A673 (cell line): ENCODE measurements at regions of chr12 and their contacts with region 1.

Region 1: GRCh38 chr12:74317078-74317601 is 220.5 kb upstream of the ATXN7L3B start:
- DNase-seq: peak; percentile 93
- H3K4me3 ChIP-seq: no peak overlapping the region
- H3K27ac ChIP-seq: peak overlapping the region; percentile 93
- H3K4me1 ChIP-seq: peaks cover 64% of the 10 kb centered on the region
- H3K27me3 ChIP-seq: no peaks in the 10 kb centered on the region
- CTCF ChIP-seq: peak; percentile 72

Region 2: DNA sequence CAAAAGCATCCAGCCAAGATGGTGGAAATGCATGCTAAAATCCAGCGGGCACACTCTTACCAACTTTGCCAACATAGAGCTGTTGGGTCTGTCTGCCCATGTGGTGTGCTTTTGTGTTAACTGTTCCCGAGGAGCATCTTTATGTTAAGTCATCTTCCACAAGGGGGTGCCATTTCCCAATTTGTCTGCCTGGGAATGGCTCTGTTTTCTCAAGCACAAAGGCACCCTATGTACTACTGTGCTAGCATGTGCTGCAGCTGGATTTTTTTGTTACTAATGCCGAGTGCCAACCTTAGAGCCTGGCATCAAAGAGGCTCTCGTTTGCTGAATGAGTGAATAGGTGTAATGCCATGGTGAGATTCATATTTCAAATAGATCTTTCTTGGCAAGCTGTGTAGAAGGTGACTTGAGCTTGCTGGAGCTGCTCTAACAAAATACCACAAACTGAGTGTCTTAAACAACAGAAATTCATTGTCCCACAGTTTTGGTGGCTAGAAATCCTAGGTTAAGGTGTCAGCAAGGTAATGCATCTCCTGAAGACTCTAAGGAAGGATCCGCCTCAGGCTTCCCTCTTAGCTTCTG is 1970.7 kb before region 1 on chr12:
- CTCF ChIA-PET with region 1: no interaction called
- POLR2A ChIA-PET with region 1: no interaction called
- intact Hi-C with region 1: loop called (anchors 2 kb)
- DNase-seq: peak; percentile 95
- H3K4me3 ChIP-seq: no peak overlapping the region
- H3K27ac ChIP-seq: no peak overlapping the region
- H3K4me1 ChIP-seq: peaks cover 32% of the 10 kb centered on the region
- H3K27me3 ChIP-seq: no peaks in the 10 kb centered on the region
- CTCF ChIP-seq: peak; percentile 74

Region 3: GRCh38 chr12:73419852-73420251 is 897.3 kb before region 1 on chr12:
- CTCF ChIA-PET with region 1: no interaction called
- POLR2A ChIA-PET with region 1: no interaction called
- intact Hi-C with region 1: loop called (anchors 5 kb)
- DNase-seq: no peak
- H3K4me3 ChIP-seq: no peak overlapping the region
- H3K27ac ChIP-seq: no peak overlapping the region
- H3K4me1 ChIP-seq: no peaks in the 10 kb centered on the region
- H3K27me3 ChIP-seq: no peaks in the 10 kb centered on the region
- CTCF ChIP-seq: no peak

Region 4: DNA sequence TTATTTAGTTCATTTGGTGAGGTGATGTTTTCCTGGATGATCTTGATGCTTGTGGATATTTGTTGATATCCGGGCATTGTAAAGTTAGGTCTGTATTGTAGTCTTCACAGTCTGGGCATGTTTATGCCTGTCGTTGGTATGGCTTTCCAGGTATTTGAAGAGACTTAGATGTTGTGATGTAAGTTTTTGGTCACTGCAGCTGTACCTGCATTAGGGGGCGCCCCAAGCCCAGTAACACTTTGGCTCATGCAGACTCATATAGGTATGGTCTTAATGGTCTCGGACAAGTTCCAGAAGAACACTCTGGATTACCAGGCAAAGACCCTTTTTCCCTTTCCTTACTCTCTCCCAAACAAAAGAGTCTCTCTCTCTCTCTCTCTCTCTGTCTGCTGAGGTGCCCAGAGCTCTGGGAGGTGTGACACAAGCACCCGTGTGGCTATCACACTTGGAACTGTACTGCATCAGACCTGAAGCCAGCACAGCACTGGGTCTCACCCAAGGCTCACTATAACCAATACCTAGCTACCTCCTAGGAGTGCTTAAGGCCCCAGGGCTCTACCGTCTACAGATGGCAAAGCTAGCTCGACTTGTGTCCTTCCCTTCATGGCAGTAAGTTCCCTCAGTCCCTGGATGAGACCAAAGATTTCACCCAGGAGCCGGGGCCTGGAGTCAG is 205.3 kb before region 1 on chr12:
- CTCF ChIA-PET with region 1: no interaction called
- POLR2A ChIA-PET with region 1: no interaction called
- intact Hi-C with region 1: loop called (anchors 5 kb)
- DNase-seq: peak; percentile 51
- H3K4me3 ChIP-seq: no peak overlapping the region
- H3K27ac ChIP-seq: no peak overlapping the region
- H3K4me1 ChIP-seq: no peaks in the 10 kb centered on the region
- H3K27me3 ChIP-seq: no peaks in the 10 kb centered on the region
- CTCF ChIP-seq: peak; percentile 63

Region 5: GRCh38 chr12:74285773-74286172 is 31.4 kb before region 1 on chr12:
- CTCF ChIA-PET with region 1: no interaction called
- POLR2A ChIA-PET with region 1: no interaction called
- intact Hi-C with region 1: no loop called
- DNase-seq: no peak
- H3K4me3 ChIP-seq: no peak overlapping the region
- H3K27ac ChIP-seq: no peak overlapping the region
- H3K4me1 ChIP-seq: no peaks in the 10 kb centered on the region
- H3K27me3 ChIP-seq: no peaks in the 10 kb centered on the region
- CTCF ChIP-seq: no peak

Region 6: DNA sequence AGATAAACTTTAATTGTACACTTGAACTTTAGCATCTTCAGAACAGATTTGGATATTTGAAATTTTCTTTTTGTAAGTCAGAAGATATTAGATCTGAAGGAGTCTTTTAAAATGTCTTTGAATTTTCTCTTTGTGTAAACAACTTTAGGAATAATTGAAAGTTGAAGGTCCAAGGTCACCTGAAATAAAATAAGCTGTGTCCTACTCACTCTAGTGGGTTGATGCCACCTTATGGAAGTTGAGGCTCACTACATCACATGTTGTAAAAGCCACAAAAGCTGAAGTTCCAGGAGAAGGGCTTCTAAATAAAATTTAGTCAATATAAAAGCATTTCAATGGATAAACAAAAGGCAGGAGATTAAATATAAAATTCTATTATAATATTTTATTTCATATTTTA is 98.5 kb after region 1 on chr12:
- CTCF ChIA-PET with region 1: interaction called, 4 read pairs
- POLR2A ChIA-PET with region 1: no interaction called
- intact Hi-C with region 1: loop called (anchors 1 kb)
- DNase-seq: peak; percentile 60
- H3K4me3 ChIP-seq: no peak overlapping the region
- H3K27ac ChIP-seq: no peak overlapping the region
- H3K4me1 ChIP-seq: peaks cover 31% of the 10 kb centered on the region
- H3K27me3 ChIP-seq: no peaks in the 10 kb centered on the region
- CTCF ChIP-seq: peak; percentile 73

Region 7: GRCh38 chr12:74641715-74642114 is 324.6 kb after region 1 on chr12:
- CTCF ChIA-PET with region 1: interaction called, 6 read pairs
- POLR2A ChIA-PET with region 1: no interaction called
- intact Hi-C with region 1: loop called (anchors 2 kb)
- DNase-seq: no peak
- H3K4me3 ChIP-seq: no peak overlapping the region
- H3K27ac ChIP-seq: no peak overlapping the region
- H3K4me1 ChIP-seq: peaks cover 11% of the 10 kb centered on the region
- H3K27me3 ChIP-seq: no peaks in the 10 kb centered on the region
- CTCF ChIP-seq: no peak